Sigmoid colon (tissue), 7 donors: ENCODE measurements at regions of chr11 and their contacts with region 1.

Region 1: GRCh38 chr11:74492974-74493790 is at the start of gene LIPT2:
- DNase-seq: peak; percentile 98
- H3K4me3 ChIP-seq: peak within 1 kb of the TSS; percentile 77 to 90 (median 80)
- H3K27ac ChIP-seq: peak within 1 kb of the TSS; percentile 97 to 99 (median 98)
- H3K4me1 ChIP-seq: peaks cover 0 to 13% (median 11%) of the 10 kb centered on the region in 4 donors
- H3K27me3 ChIP-seq: no peaks in the 10 kb centered on the region
- CTCF ChIP-seq: no peak
- EP300 ChIP-seq: no peak
- POLR2A ChIP-seq: peak; percentile 35 to 50
- total RNA-seq, gene LIPT2: 3.2 to 3.9 (median 3.8) TPM

Region 2: DNA sequence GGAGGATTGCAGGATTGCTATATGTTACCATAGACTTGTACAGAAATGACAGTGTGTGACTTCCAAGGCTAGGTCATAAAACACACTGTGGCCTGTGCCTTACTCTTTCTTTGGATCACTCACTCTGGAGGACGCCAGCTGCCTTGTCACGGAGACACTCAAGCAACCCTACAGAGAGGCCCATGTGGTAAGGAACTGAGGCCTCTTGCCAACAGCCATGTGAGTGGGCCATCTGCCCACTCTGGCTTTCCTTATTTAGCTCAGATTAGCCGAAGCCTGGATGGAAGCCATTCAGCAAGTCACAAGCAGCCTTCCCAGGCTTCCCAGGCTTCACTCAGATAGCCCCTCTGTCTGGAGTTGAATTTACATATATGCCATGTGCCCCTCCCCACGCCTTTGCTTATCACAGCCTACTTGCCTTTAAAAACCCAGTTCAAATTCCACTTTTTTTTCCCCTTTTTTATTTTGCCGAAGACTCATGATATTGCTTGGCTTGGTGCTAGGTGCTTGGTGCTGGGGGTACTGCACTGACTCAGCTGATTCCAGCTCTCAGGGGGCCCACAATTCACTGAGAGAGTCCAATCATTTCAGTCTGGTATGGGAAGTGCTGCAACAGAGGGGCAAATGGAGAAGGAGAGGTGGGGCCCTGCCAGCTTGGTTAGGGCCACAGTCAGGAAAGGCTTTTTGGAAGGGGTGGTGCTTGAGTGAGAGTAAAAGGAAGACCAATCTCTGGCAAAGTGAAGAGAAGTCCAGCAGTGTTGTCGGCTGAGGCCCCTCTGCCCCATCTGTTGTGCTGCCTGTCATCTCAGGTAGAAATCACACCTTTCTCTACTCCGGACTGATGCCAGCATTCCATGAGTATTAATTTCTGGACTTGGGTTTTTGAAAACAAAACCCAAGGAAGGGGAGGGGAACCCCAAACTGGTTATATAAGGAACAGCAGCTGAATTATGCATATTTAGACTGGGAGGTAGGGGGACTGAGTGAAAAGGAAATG is 167.2 kb before region 1 on chr11:
- intact Hi-C with region 1: no loop called
- DNase-seq: peak; percentile 95
- H3K4me3 ChIP-seq: no peak overlapping the region
- H3K27ac ChIP-seq: peak overlapping the region; percentile 22 to 71 (median 62)
- H3K4me1 ChIP-seq: peaks cover 0 to 38% (median 33%) of the 10 kb centered on the region in 4 donors
- H3K27me3 ChIP-seq: no peaks in the 10 kb centered on the region
- CTCF ChIP-seq: no peak
- EP300 ChIP-seq: peak in 1 of 4 donors; percentile 72
- POLR2A ChIP-seq: no peak

Region 3: GRCh38 chr11:74592441-74593362 is 99.5 kb after region 1 on chr11 and contains the start of gene POLD3:
- intact Hi-C with region 1: loop called (anchors 5 kb)
- DNase-seq: peak; percentile 95
- H3K4me3 ChIP-seq: peak within 1 kb of the TSS; percentile 84 to 93 (median 88)
- H3K27ac ChIP-seq: peak within 1 kb of the TSS; percentile 77 to 82 (median 80)
- H3K4me1 ChIP-seq: peaks cover 0 to 21% (median 15%) of the 10 kb centered on the region in 4 donors
- H3K27me3 ChIP-seq: no peaks in the 10 kb centered on the region
- CTCF ChIP-seq: no peak
- EP300 ChIP-seq: no peak
- POLR2A ChIP-seq: no peak
- total RNA-seq, gene POLD3: 11.2 to 23.0 (median 14.8) TPM